PC-3 (cell line): ENCODE measurements at regions of chr3 and their contacts with region 1.

Region 1: GRCh38 chr3:138834359-138835212 is at the start of gene PIK3CB:
- DNase-seq: peak; percentile 87
- ATAC-seq: peak; percentile 91
- H3K4me3 ChIP-seq: peak within 1 kb of the TSS; percentile 99
- H3K27ac ChIP-seq: peak within 1 kb of the TSS; percentile 73
- H3K4me1 ChIP-seq: peaks cover 5% of the 10 kb centered on the region; the same call in 1 of the 2 replicates
- H3K27me3 ChIP-seq: no peaks in the 10 kb centered on the region
- CTCF ChIP-seq: peak; percentile 37; the same call in 1 of the 2 replicates
- total RNA-seq, gene PIK3CB: 8.3 and 15.7 TPM in 2 replicates

Region 2: GRCh38 chr3:138694287-138695007 is 140.1 kb before region 1 on chr3:
- CTCF ChIA-PET with region 1: no interaction called
- POLR2A ChIA-PET with region 1: no interaction called
- intact Hi-C with region 1: loop called (anchors 1 kb)
- DNase-seq: peak; percentile 76
- ATAC-seq: peak; percentile 92
- H3K4me3 ChIP-seq: no peak overlapping the region
- H3K27ac ChIP-seq: peak overlapping the region; percentile 62
- H3K4me1 ChIP-seq: peaks cover 15% of the 10 kb centered on the region
- H3K27me3 ChIP-seq: no peaks in the 10 kb centered on the region
- CTCF ChIP-seq: no peak

Region 3: DNA sequence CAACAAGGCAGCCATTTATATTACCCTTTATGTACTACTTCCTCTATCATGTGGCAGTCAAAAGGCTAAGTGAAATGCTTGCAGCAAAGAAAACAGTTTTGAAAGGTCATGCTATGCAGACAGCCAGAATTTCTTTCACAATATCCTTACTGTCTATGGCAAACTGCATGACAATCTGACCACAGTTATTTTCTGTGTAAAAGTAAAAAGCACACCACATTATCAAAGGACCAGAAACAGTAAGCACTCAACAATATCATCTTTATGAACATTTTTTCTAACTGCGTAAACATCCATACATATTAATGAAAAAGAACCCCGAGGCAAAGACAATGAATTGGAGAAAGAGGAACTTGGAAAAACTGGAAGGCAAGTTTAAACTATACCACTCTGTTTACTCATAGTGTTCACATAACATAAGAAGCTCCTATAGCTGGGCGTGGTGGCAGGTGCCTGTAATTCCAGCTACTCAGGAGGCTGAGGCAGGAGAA is 47.8 kb before region 1 on chr3:
- CTCF ChIA-PET with region 1: no interaction called
- POLR2A ChIA-PET with region 1: no interaction called
- intact Hi-C with region 1: loop called (anchors 5 kb)
- DNase-seq: peak; percentile 25
- ATAC-seq: peak; percentile 78
- H3K4me3 ChIP-seq: no peak overlapping the region
- H3K27ac ChIP-seq: no peak overlapping the region
- H3K4me1 ChIP-seq: no peaks in the 10 kb centered on the region
- H3K27me3 ChIP-seq: no peaks in the 10 kb centered on the region
- CTCF ChIP-seq: no peak

Region 4: DNA sequence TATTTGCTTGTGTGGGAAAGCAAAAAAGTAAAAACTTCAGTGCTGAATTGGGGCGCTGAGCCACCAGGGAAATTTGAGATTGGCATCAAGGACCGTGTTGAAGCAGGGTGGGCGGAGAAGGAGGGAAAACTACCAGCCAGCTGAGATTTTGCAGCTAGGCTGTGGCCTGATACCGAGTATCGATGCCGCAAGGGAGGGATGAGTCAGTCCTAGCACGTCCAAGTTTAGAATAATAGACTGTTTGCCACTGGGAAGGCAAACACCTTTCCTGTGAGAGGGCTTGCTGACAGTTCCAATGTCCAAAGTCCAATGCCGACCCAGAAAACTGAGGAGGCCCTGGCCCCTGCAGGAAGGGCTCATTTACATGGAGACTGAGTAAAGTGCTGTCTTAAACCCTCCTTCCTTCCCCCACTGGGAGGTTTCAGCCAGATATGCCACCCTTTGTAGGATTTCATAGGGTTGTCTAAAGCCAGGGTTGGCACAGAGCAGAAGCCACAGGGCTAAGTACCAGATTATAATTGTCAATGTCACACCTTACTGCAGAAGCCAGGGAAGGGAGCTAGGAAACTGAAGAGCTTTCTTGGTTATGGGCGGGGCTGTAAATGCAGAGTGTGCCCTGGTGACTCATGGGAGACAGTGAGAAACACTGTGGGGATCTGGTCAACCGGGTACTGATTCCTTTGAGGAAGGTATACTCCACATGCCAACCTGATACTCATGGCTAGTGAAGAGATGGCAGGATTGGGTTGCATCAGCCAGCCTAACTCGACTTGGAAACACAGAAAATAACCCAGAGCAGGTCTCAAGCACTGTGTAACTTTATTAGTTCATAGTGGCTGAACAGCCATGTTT is 28.6 kb after region 1 on chr3:
- CTCF ChIA-PET with region 1: no interaction called
- POLR2A ChIA-PET with region 1: no interaction called
- intact Hi-C with region 1: no loop called
- DNase-seq: peak; percentile 88
- ATAC-seq: peak; percentile 97
- H3K4me3 ChIP-seq: peak overlapping the region; percentile 40; the same call in 1 of the 2 replicates
- H3K27ac ChIP-seq: peak overlapping the region; percentile 98
- H3K4me1 ChIP-seq: peaks cover 23% of the 10 kb centered on the region
- H3K27me3 ChIP-seq: no peaks in the 10 kb centered on the region
- CTCF ChIP-seq: no peak

Region 5: DNA sequence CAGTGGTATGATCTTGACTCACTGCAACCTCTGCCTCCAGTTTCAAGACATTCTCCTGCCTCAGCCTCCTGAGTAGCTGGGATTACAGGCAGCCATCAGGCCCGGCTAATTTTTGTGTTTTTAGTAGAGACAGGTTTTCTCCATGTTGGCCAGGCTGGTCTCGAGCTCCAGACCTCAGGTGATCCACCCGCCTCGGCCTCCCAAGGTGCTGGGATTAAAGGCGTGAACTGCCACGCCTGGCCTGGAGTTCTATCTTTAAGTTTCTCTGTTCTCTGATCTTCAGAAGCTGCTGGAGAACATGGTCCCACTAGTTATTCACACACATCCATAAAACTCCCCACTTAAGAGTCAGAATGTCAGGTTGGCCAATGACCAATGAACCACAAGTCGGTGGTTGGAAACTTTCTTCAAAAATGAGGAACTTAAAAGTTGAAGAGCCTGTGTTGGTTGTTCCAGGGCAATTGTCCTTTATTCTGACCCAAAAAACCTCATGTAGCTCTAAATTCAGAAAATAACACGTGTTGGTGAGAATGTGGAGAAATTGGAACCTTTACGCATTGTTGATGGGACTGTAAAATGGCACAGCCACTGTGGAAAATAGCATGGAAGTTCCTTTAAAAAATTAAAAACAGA is 56.1 kb after region 1 on chr3:
- CTCF ChIA-PET with region 1: no interaction called
- POLR2A ChIA-PET with region 1: no interaction called
- intact Hi-C with region 1: loop called (anchors 2 kb)
- DNase-seq: no peak
- ATAC-seq: no peak
- H3K4me3 ChIP-seq: no peak overlapping the region
- H3K27ac ChIP-seq: peak overlapping the region; percentile 45
- H3K4me1 ChIP-seq: peaks cover 6% of the 10 kb centered on the region
- H3K27me3 ChIP-seq: no peaks in the 10 kb centered on the region
- CTCF ChIP-seq: no peak